Gastrocnemius medialis (tissue), 4 donors: ENCODE measurements at regions of chr9 and their contacts with region 1.

Region 1: DNA sequence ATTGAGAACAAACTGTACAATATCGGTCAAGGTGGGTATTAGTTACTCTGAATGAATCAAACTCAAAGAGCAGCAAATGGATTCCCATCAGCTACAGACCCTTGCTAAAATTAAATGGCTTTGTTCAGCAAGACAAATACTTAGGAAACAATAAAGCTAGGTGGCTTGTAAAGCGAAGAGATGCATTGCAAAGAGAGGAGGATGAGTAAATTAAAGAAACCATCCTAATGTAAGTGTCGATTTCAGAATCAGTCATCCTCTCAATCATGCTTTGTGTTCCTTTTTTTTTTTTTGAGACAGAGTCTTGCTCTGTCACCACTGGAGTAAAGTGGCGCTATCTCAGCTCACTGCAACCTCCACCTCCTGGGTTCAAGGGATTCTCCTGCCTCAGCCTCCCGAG is 359.2 kb upstream of the ZNF462 start:
- DNase-seq: no peak
- ATAC-seq: no peak
- H3K4me3 ChIP-seq: no peak overlapping the region
- H3K27ac ChIP-seq: no peak overlapping the region
- H3K4me1 ChIP-seq: no peaks in the 10 kb centered on the region
- H3K27me3 ChIP-seq: no peaks in the 10 kb centered on the region
- CTCF ChIP-seq: no peak
- POLR2A ChIP-seq: no peak

Region 2: GRCh38 chr9:106621313-106622163 is 117.8 kb after region 1 on chr9:
- in situ Hi-C with region 1: loop called in 1 of 4 experiments (anchors 25 kb)
- intact Hi-C with region 1: no loop called
- DNase-seq: no peak
- ATAC-seq: peak; percentile 72 to 75
- H3K4me3 ChIP-seq: peak overlapping the region in 1 of 4 donors; percentile 11
- H3K27ac ChIP-seq: no peak overlapping the region
- H3K4me1 ChIP-seq: no peaks in the 10 kb centered on the region
- H3K27me3 ChIP-seq: no peaks in the 10 kb centered on the region
- CTCF ChIP-seq: no peak
- POLR2A ChIP-seq: no peak